ENCODE measurements at regions of chr2 and their contacts with region 1.

Region 1: GRCh38 chr2:231590619-231591018 is 2.0 kb upstream of the TEX44 start:
- DNase-seq: no peak
- H3K4me3 ChIP-seq: no peak overlapping the region
- H3K27ac ChIP-seq: no peak overlapping the region
- H3K4me1 ChIP-seq: peaks cover 0 to 5% of the 10 kb centered on the region in 2 experiments; a peak in 1 of 4 replicates
- H3K27me3 ChIP-seq: no peaks in the 10 kb centered on the region
- CTCF ChIP-seq: no peak
- EP300 ChIP-seq: no peak
- RAD21 ChIP-seq: no peak

Region 2: GRCh38 chr2:231604685-231605606 is 14.3 kb after region 1 on chr2:
- CTCF ChIA-PET with region 1: interaction called, 48 read pairs
- POLR2A ChIA-PET with region 1: interaction called, 5 read pairs
- DNase-seq: peak; percentile 99
- H3K4me3 ChIP-seq: peak overlapping the region; percentile 51 to 66
- H3K27ac ChIP-seq: peak overlapping the region; percentile 96
- H3K4me1 ChIP-seq: peaks cover 10 to 28% of the 10 kb centered on the region in 2 experiments
- H3K27me3 ChIP-seq: no peaks in the 10 kb centered on the region
- CTCF ChIP-seq: no peak
- EP300 ChIP-seq: peak in 1 of 2 experiments; percentile 19; a peak in 1 of 4 replicates
- RAD21 ChIP-seq: no peak

Measured in SK-N-SH (cell line).